Heart left ventricle (tissue), 16 donors: ENCODE measurements at regions of chr5 and their contacts with region 1.

Region 1: DNA sequence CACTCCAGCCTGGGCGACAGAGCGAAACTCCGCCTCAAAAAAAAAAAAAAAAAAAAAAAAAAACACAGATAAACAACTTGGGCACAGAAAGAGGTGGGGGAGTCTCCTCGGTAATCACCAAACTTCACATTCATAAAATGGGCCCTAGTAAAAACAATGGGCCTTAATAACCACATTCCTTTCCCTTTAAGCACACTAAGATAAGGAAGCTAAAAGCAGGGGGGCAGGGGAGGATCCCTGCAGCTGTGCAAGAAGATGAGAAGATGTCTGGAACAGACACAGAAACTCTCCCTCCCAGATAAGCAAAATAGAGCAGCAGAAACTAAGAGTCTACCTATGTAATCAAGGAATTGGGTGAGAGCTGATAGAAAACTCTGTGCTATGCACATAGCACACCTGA is 111.2 kb upstream of the FAM174A start:
- DNase-seq: no peak
- ATAC-seq: no peak
- H3K4me3 ChIP-seq: no peak overlapping the region
- H3K27ac ChIP-seq: no peak overlapping the region
- H3K4me1 ChIP-seq: no peaks in the 10 kb centered on the region
- H3K27me3 ChIP-seq: no peaks in the 10 kb centered on the region
- CTCF ChIP-seq: no peak
- POLR2A ChIP-seq: no peak

Region 2: GRCh38 chr5:100647461-100648230 is 223.6 kb after region 1 on chr5:
- intact Hi-C with region 1: loop called in 1 of 10 experiments (anchors 10 kb)
- DNase-seq: peak; percentile 46 to 73 (median 57)
- ATAC-seq: peak in 2 of 4 donors; percentile 34 to 41
- H3K4me3 ChIP-seq: no peak overlapping the region
- H3K27ac ChIP-seq: no peak overlapping the region
- H3K4me1 ChIP-seq: peaks cover 0 to 6% (median 0%) of the 10 kb centered on the region in 12 donors
- H3K27me3 ChIP-seq: no peaks in the 10 kb centered on the region
- CTCF ChIP-seq: no peak
- POLR2A ChIP-seq: no peak

Region 3: DNA sequence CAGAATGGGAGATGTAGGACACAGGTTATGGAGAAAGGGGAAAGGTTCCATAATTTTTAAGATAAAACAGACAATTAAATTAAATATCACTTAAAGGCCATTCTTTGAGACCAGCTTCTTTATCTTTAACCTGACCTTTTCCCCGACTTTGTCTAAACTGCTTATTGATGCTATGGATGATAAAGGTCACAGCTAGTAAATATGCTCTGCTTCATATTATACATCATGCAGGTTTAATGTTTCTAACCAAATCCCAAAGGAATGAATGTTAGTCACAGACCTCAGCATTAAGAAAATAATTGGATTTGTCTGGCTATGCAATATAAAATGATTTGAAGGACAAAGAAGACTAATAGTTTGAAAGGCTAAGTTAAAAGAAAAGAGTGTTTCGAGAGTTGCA is 331.4 kb after region 1 on chr5:
- intact Hi-C with region 1: no loop called
- DNase-seq: no peak
- ATAC-seq: no peak
- H3K4me3 ChIP-seq: no peak overlapping the region
- H3K27ac ChIP-seq: no peak overlapping the region
- H3K4me1 ChIP-seq: no peaks in the 10 kb centered on the region
- H3K27me3 ChIP-seq: no peaks in the 10 kb centered on the region
- CTCF ChIP-seq: no peak
- POLR2A ChIP-seq: no peak

Region 4: DNA sequence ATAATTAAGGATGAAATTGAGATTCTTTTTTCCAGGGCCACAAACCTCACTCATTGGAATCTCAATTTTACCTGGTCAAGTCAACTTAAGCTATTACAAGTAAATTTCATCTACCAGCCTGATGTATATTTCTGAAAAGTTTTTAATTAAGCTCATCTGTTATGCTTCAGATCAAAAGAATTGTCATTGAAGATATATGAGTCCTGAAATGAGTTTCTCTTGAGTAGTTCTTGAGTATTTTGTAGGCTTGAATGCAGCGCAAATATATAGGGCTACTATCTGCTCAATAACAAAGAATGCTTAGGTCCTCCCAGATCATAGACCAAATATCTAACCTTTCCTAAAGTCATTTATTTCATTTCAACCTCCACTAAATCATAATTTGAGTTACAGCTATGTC is 961.3 kb after region 1 on chr5:
- intact Hi-C with region 1: loop called in 2 of 10 experiments (anchors 10 kb)
- DNase-seq: no peak
- ATAC-seq: no peak
- H3K4me3 ChIP-seq: no peak overlapping the region
- H3K27ac ChIP-seq: no peak overlapping the region
- H3K4me1 ChIP-seq: no peaks in the 10 kb centered on the region
- H3K27me3 ChIP-seq: no peaks in the 10 kb centered on the region
- CTCF ChIP-seq: no peak
- POLR2A ChIP-seq: no peak

Region 5: GRCh38 chr5:101390151-101390908 is 966.3 kb after region 1 on chr5:
- intact Hi-C with region 1: loop called in 2 of 10 experiments (anchors 10 kb)
- DNase-seq: peak in 1 of 5 donors; percentile 6
- ATAC-seq: no peak
- H3K4me3 ChIP-seq: no peak overlapping the region
- H3K27ac ChIP-seq: no peak overlapping the region
- H3K4me1 ChIP-seq: no peaks in the 10 kb centered on the region
- H3K27me3 ChIP-seq: no peaks in the 10 kb centered on the region
- CTCF ChIP-seq: peak; percentile 37 to 70 (median 53)
- POLR2A ChIP-seq: no peak